GM12878 (cell line): ENCODE measurements at regions of chr13 and their contacts with region 1.

Region 1: GRCh38 chr13:39105110-39105509 is 66.9 kb downstream of the NHLRC3 start:
- DNase-seq: no peak
- ATAC-seq: no peak
- H3K4me3 ChIP-seq: no peak overlapping the region
- H3K27ac ChIP-seq: no peak overlapping the region
- H3K4me1 ChIP-seq: no peaks in the 10 kb centered on the region
- H3K27me3 ChIP-seq: no peaks in the 10 kb centered on the region
- CTCF ChIP-seq: no peak
- EP300 ChIP-seq: no peak
- POLR2A ChIP-seq: no peak
- RAD21 ChIP-seq: no peak

Region 2: GRCh38 chr13:39051157-39051556 is 54.0 kb before region 1 on chr13:
- CTCF ChIA-PET with region 1: no interaction called
- POLR2A ChIA-PET with region 1: no interaction called
- RAD21 ChIA-PET with region 1: no interaction called
- SMC1A ChIA-PET with region 1: no interaction called
- in situ Hi-C with region 1: loop called (anchors 5 kb)
- intact Hi-C with region 1: no loop called
- DNase-seq: no peak
- ATAC-seq: peak; percentile 54
- H3K4me3 ChIP-seq: no peak overlapping the region
- H3K27ac ChIP-seq: no peak overlapping the region
- H3K4me1 ChIP-seq: no peaks in the 10 kb centered on the region
- H3K27me3 ChIP-seq: no peaks in the 10 kb centered on the region
- CTCF ChIP-seq: peak; percentile 27 to 55 (median 31); a peak in 4 of 6 replicates
- EP300 ChIP-seq: no peak
- POLR2A ChIP-seq: no peak
- RAD21 ChIP-seq: peak; percentile 76